Posterior vena cava (tissue), 2 donors: ENCODE measurements at regions of chr12 and their contacts with region 1.

Region 1: GRCh38 chr12:20475542-20475941 is 107.2 kb downstream of the PDE3A start:
- DNase-seq: no peak

Region 2: GRCh38 chr12:20426191-20426590 is 49.4 kb before region 1 on chr12:
- intact Hi-C with region 1: no loop called
- DNase-seq: peak; percentile 86

Region 3: DNA sequence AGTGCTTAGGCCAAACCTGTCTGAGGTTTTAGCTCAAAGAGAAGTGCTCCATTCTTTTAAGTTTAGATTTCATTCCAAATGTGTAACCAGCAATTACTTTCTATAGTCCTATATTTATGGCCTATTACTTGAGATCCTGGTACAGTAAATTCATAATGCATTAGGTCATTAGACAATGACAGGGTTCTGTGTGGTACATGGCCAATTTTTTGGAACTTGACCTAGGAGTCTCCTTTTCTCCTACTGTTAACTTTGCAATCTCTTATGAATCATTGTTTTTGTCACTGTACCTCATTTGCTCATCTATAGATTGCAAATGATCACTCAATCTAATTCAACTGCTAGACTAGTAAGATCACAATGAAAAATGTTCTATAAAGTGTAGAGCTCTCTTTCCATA is 29.5 kb after region 1 on chr12:
- intact Hi-C with region 1: loop called in 1 of 2 experiments (anchors 1 kb)
- DNase-seq: no peak